Naive thymus-derived CD8-positive, alpha-beta T cell (primary cell): ENCODE measurements at regions of chr15 and their contacts with region 1.

Region 1: DNA sequence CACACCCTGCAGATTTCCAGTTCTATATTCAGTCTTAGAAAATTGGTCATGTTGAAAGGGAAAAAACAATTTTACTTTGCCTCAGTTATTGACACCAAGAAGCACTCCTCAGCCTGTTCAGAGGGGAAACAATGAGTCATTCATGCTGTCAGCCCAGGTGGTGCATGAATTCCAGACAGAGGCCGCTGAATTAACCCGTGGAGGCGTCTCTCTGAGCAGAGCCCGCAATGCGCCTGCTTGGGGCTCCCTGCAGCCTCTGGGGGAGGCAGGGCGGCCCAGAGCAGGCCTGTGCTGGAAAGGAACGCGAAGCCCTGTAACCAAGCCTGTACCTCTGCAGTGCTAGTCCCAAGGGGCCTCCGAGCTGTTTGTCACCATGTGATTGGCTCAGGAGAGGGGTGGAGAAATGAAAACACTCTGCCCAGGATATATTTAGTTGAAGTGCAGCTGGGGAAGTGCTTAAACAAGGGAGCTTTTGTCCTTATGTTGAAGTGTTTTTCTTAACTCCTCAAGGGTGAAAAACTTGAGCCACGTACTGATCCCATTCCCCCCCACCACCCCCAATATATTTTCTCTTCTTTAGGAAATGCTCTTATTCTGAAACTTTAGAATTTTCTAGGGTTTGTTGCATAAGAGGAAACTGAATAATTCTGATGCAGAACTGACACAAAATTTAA is 68.3 kb upstream of the CHD2 start:
- DNase-seq: peak; percentile 77 to 97 (median 87)
- ATAC-seq: peak; percentile 91 to 94
- H3K4me3 Mint-ChIP-seq: peak overlapping the region; percentile 70 to 86 (median 81)
- H3K27ac Mint-ChIP-seq: peak overlapping the region; percentile 94 to 98 (median 97)
- H3K4me1 Mint-ChIP-seq: peaks cover 18 to 55% (median 46%) of the 10 kb centered on the region in 4 donors
- H3K27me3 Mint-ChIP-seq: no peaks in the 10 kb centered on the region

Region 2: DNA sequence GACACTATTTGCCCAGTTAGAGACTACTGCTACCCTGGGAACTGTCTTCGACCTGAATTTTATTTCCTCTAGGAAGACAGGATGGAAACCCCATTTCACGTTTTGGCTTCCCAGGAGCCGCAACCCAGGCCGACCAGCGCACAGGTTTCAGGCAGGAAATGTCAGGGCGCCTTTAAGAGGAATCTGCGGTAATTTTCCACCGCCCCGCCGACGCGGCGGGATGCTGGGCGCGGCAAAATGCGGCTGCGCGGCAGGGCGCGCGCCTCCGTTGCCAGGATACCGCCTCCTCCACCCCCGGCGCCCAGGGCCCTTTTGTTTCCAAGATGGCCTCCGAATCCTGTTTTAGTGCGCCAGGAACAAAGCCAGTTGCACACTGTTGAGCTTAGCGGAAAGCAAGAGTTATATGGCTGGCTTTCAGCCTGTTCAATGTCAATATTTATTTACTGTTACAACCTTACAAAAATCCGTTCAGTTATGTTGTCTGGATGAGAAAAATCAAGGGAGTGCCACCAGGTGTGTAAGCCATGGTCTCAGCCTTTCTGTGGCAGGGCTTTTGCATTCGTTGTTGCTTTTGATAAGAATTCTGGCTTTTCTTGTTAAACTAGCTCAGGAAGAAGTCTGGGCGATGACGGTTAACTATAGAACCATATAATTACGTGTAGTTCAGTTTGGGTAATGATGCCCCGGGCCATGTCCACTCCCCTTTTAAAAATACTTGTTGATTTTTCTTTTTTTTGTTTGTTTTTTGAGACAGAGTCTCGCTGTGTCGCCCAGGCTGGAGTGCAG is 11.4 kb before region 1 on chr15:
- POLR2A ChIA-PET with region 1: interaction called, 124 read pairs
- DNase-seq: peak; percentile 78 to 93 (median 83)
- ATAC-seq: peak; percentile 79 to 91
- H3K4me3 Mint-ChIP-seq: peak overlapping the region; percentile 86 to 95 (median 89)
- H3K27ac Mint-ChIP-seq: peak overlapping the region; percentile 85 to 98 (median 97)
- H3K4me1 Mint-ChIP-seq: peaks cover 16 to 60% (median 49%) of the 10 kb centered on the region in 4 donors
- H3K27me3 Mint-ChIP-seq: no peaks in the 10 kb centered on the region

Region 3: DNA sequence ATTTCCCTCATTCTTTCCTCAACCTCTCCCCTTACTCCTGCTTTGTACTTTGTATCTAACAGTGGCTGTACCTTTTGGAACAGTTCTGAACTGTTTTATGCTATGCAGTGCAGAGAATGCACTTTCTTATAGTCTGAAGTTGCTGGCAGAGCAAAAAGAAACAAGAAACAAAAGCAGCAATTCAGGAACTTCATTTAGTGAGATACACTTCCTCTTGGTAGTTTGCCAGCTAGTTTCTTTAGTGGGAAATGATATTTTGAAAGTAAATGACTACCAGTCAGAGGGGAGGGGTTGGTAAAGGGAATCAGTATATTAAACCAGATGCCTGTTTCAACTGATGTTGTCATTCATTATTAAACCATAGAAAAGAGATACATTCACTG is 13.3 kb after region 1 on chr15:
- POLR2A ChIA-PET with region 1: interaction called, 152 read pairs
- DNase-seq: peak in 4 of 10 donors; percentile 13 to 78 (median 71)
- ATAC-seq: peak; percentile 38 to 43
- H3K4me3 Mint-ChIP-seq: peak overlapping the region; percentile 68 to 92 (median 88)
- H3K27ac Mint-ChIP-seq: peak overlapping the region; percentile 90 to 100 (median 97)
- H3K4me1 Mint-ChIP-seq: peaks cover 32 to 86% (median 74%) of the 10 kb centered on the region in 4 donors
- H3K27me3 Mint-ChIP-seq: no peaks in the 10 kb centered on the region

Region 4: GRCh38 chr15:92889390-92890107 is 57.8 kb after region 1 on chr15:
- POLR2A ChIA-PET with region 1: interaction called, 352 read pairs
- DNase-seq: peak in 3 of 10 donors; percentile 12 to 28 (median 14)
- ATAC-seq: peak; percentile 13 to 21
- H3K4me3 Mint-ChIP-seq: peak overlapping the region; percentile 36 to 96 (median 76)
- H3K27ac Mint-ChIP-seq: peak overlapping the region; percentile 65 to 92 (median 84)
- H3K4me1 Mint-ChIP-seq: peaks cover 30 to 85% (median 61%) of the 10 kb centered on the region in 4 donors
- H3K27me3 Mint-ChIP-seq: no peaks in the 10 kb centered on the region

Region 5: GRCh38 chr15:92896561-92896960 is 64.8 kb after region 1 on chr15:
- POLR2A ChIA-PET with region 1: interaction called, 79 read pairs
- DNase-seq: no peak
- ATAC-seq: no peak
- H3K4me3 Mint-ChIP-seq: peak overlapping the region; percentile 4 to 88 (median 64)
- H3K27ac Mint-ChIP-seq: peak overlapping the region; percentile 15 to 92 (median 78)
- H3K4me1 Mint-ChIP-seq: peaks cover 20 to 76% (median 62%) of the 10 kb centered on the region in 4 donors
- H3K27me3 Mint-ChIP-seq: no peaks in the 10 kb centered on the region

Region 6: GRCh38 chr15:92917606-92918407 is 86.0 kb after region 1 on chr15:
- POLR2A ChIA-PET with region 1: interaction called, 34 read pairs
- DNase-seq: peak; percentile 75 to 95 (median 90)
- ATAC-seq: peak; percentile 16 to 33
- H3K4me3 Mint-ChIP-seq: peak overlapping the region; percentile 26 to 92 (median 66)
- H3K27ac Mint-ChIP-seq: peak overlapping the region; percentile 90 to 100 (median 98)
- H3K4me1 Mint-ChIP-seq: peaks cover 43 to 93% (median 83%) of the 10 kb centered on the region in 4 donors
- H3K27me3 Mint-ChIP-seq: no peaks in the 10 kb centered on the region